Mammary epithelial cell (primary cell): ENCODE measurements at regions of chr5 and their contacts with region 1.

Region 1: DNA sequence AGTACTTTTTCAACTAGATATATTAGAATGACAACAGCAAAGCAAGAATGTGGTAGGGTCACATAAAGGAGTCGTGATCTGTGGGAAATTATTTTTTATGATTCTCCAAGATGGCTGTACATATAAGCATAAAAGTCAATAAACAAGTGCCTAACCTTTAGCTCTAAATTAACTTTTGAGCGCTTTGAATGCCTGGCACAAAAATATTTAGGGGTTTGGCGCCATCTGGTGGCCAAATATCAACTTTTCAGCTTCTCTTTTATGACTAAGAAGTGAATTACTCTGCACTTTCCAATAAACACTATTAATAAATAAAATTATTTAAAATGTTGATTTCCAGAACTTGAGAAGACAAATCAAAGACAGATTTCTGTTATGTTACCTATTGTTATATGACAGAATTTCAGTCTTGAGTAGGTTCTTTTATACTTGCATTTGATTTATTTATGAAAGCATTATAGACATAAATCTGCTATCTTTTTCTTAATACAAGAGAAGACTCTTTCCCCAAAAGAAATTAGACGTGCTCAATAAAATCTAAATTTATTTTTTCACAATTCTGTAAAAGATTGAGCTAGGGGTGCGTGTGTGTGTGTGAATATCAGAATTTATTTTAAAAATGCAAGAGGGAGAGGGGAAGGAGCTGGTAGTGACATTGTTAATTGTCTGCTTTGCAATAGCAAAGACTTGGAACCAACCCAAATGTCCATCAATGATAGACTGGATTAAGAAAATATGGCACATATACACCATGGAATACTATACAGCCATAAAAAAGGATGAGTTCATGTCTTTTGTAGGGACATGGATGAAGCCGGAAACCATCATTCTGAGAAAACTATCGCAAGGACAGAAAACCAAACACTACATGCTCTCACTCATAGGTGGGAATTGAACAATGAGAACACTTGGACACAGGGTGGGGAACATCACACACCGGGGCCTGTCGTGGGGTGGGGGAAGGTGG is 36.7 kb upstream of the ARRDC3 start:
- DNase-seq: peak; percentile 29
- H3K4me3 ChIP-seq: no peak overlapping the region
- H3K27ac ChIP-seq: no peak overlapping the region
- H3K4me1 ChIP-seq: no peaks in the 10 kb centered on the region
- H3K27me3 ChIP-seq: no peaks in the 10 kb centered on the region
- CTCF ChIP-seq: peak; percentile 32 to 54

Region 2: DNA sequence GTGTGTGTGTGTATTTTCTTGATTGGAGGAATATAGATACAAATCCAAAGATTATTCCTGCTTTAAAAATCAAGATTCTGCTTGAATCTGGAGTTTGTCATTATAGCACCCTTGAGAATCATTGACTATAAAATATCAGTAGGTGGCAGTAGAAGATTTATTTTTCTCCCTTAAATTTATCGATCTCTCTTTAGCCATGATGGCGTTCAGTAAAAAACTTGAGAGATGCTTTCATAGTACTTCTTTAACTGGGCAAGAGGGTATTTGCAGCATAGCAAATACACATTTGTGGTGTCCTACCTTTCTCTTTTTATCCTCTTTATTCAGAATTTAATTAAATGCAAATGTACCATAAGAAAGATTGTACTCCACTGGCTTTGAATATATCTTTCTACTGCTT is 553.5 kb before region 1 on chr5:
- CTCF ChIA-PET with region 1: no interaction called
- dilution Hi-C with region 1: no loop called
- in situ Hi-C with region 1: loop called in 1 of 2 experiments (anchors 25 kb)
- intact Hi-C with region 1: loop called (anchors 1 kb)
- DNase-seq: no peak
- H3K4me3 ChIP-seq: no peak overlapping the region
- H3K27ac ChIP-seq: no peak overlapping the region
- H3K4me1 ChIP-seq: no peaks in the 10 kb centered on the region
- H3K27me3 ChIP-seq: no peaks in the 10 kb centered on the region
- CTCF ChIP-seq: peak; percentile 41 to 48

Region 3: DNA sequence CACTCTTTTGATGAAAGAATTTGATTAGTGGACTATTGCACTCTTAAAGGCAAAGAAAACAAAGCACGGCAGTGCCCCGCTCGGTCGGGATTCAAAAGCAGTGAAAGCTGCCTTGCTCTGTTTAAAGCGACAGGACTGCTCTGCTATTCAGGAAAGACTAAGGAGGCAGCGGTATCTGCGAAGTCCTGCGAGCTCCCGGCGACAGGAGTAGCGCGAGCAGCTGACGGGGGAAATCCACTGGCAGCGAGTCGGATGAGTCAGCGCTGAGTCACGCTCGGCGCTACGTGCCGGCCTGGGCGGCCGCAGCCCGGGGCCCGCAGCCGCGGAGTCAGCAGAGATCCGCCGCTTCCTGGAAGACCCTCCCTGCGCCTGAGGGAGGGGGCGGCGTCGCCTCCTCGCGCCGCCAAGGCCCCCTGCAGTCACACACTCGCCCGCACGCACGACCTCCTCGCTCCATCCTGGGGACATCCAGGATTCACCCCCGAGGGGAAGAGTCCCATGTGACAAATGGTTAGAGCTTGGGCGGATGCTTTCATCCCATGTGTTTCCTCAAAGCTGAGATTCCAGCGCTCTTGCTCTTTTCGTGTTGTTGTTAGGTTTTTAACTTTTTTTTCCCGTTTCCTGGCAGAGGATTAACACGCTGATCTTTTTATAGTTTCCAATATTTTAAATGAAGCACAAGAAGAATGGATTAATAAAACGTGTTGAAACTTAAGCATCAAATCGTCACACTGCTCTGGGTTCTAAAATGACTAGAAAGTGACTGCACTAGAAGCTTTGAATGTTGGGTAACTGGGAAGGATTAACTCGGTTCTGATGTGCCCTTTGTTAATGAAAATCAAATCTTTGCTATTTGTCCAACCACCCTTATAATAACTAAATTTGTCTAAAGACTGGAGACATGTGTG is 139.2 kb before region 1 on chr5:
- CTCF ChIA-PET with region 1: no interaction called
- dilution Hi-C with region 1: no loop called
- in situ Hi-C with region 1: no loop called
- intact Hi-C with region 1: no loop called
- DNase-seq: peak; percentile 96
- H3K4me3 ChIP-seq: peak overlapping the region; percentile 47 to 66 (median 59)
- H3K27ac ChIP-seq: peak overlapping the region; percentile 98
- H3K4me1 ChIP-seq: peaks cover 31% of the 10 kb centered on the region
- H3K27me3 ChIP-seq: no peaks in the 10 kb centered on the region
- CTCF ChIP-seq: no peak

Region 4: DNA sequence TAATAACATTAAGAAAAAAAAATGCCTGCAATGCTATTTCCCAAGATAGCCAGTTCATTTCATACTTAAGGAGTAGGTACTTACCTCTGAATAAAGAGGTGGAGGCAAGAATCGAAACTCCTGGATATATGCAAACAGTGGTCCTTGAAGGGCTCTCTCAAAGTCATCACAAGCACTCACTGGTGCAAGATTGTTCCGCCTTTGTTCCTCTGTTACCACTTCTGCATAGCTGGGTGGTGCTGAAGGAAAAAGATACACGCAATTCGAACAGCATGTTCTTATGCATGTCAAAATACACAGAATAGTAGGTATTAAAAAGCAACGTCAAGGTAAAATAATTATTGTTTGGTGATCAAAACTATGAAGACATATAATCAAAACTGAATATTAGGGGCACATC is 46.3 kb before region 1 on chr5:
- CTCF ChIA-PET with region 1: no interaction called
- dilution Hi-C with region 1: loop called (anchors 5 kb)
- in situ Hi-C with region 1: no loop called
- intact Hi-C with region 1: no loop called
- DNase-seq: no peak
- H3K4me3 ChIP-seq: no peak overlapping the region
- H3K27ac ChIP-seq: no peak overlapping the region
- H3K4me1 ChIP-seq: peaks cover 2% of the 10 kb centered on the region
- H3K27me3 ChIP-seq: no peaks in the 10 kb centered on the region
- CTCF ChIP-seq: no peak